ENCODE measurements at regions of chrX and their contacts with region 1.

Region 1: GRCh38 chrX:153927922-153928760 is 2.1 kb upstream of the ARHGAP4 start:
- DNase-seq: peak; percentile 97
- ATAC-seq: peak; percentile 91
- H3K4me3 ChIP-seq: peak overlapping the region; percentile 70
- H3K27ac ChIP-seq: peak overlapping the region; percentile 70
- H3K4me1 ChIP-seq: peaks cover 25% of the 10 kb centered on the region
- H3K27me3 ChIP-seq: no peaks in the 10 kb centered on the region
- CTCF ChIP-seq: no peak; the same call in 1 of the 2 replicates

Region 2: GRCh38 chrX:153910446-153910845 is 17.7 kb before region 1 on chrX:
- CTCF ChIA-PET with region 1: interaction called, 10 read pairs
- POLR2A ChIA-PET with region 1: interaction called, 29 read pairs
- intact Hi-C with region 1: no loop called
- DNase-seq: no peak
- ATAC-seq: peak; percentile 68
- H3K4me3 ChIP-seq: no peak overlapping the region
- H3K27ac ChIP-seq: no peak overlapping the region
- H3K4me1 ChIP-seq: no peaks in the 10 kb centered on the region
- H3K27me3 ChIP-seq: no peaks in the 10 kb centered on the region
- CTCF ChIP-seq: no peak

Region 3: GRCh38 chrX:153947009-153947769 is 19.0 kb after region 1 on chrX:
- CTCF ChIA-PET with region 1: interaction called, 16 read pairs
- POLR2A ChIA-PET with region 1: no interaction called
- intact Hi-C with region 1: loop called (anchors 1 kb)
- DNase-seq: peak; percentile 84
- ATAC-seq: peak; percentile 88
- H3K4me3 ChIP-seq: no peak overlapping the region
- H3K27ac ChIP-seq: no peak overlapping the region
- H3K4me1 ChIP-seq: no peaks in the 10 kb centered on the region
- H3K27me3 ChIP-seq: no peaks in the 10 kb centered on the region
- CTCF ChIP-seq: peak; percentile 93

Region 4: GRCh38 chrX:153971450-153972367 is 43.6 kb after region 1 on chrX and contains the start of gene HCFC1:
- CTCF ChIA-PET with region 1: interaction called, 5 read pairs
- POLR2A ChIA-PET with region 1: no interaction called
- intact Hi-C with region 1: loop called (anchors 2 kb)
- DNase-seq: peak; percentile 82
- ATAC-seq: peak; percentile 38
- H3K4me3 ChIP-seq: peak within 1 kb of the TSS; percentile 99
- H3K27ac ChIP-seq: peak within 1 kb of the TSS; percentile 100
- H3K4me1 ChIP-seq: peaks cover 29% of the 10 kb centered on the region
- H3K27me3 ChIP-seq: no peaks in the 10 kb centered on the region
- CTCF ChIP-seq: no peak
- total RNA-seq, gene HCFC1: 66.9 and 94.0 TPM in 2 replicates